Spleen (tissue), 13 donors: ENCODE measurements at regions of chr17 and their contacts with region 1.

Region 1: DNA sequence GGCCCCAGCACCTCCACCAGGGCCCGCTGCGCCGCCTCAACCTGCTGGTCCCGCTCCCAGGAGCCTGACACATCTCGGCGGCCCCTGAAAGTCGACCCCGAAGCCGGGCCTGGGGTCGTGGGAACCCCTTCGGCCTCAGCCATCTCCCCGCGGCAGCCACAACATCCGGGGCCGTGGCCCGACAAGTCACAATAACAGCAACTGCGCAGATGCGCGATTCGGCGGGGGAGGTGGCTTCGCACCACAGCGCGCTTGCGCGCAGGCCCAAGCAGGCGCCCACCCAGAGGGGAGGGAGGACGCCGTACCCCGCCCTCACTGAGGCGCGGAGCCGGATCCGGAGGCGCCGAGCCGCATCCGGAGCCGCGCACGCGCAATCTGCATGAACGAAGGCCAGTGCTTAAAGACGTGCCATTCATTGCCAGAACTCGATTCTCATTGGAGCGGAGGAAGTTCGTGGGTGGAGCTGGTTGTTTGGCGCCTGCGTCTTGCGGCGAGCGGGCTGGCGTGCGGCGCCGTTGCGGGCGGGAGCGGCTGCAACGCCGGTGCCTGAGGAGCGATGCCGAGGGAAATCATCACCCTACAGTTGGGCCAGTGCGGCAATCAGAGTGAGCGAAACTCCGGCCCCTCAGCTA is at the starts of genes RETREG3 and TUBG1:
- DNase-seq: peak; percentile 100
- H3K4me3 ChIP-seq: peak within 1 kb of the TSS; percentile 74 to 89 (median 84)
- H3K27ac ChIP-seq: peak within 1 kb of the TSS; percentile 88 to 99 (median 94)
- H3K4me1 ChIP-seq: peaks cover 26 to 61% (median 49%) of the 10 kb centered on the region in 6 donors
- H3K27me3 ChIP-seq: no peaks in the 10 kb centered on the region
- CTCF ChIP-seq: peak in 6 of 11 experiments; percentile 15 to 43 (median 28)
- POLR2A ChIP-seq: peak; percentile 61 to 89 (median 88)
- total RNA-seq, gene RETREG3: 65.8 to 87.5 (median 80.5) TPM
- total RNA-seq, gene TUBG1: 20.4 to 33.8 (median 26.3) TPM

Region 2: GRCh38 chr17:42653179-42654124 is 44.2 kb after region 1 on chr17:
- intact Hi-C with region 1: no loop called
- DNase-seq: no peak
- H3K4me3 ChIP-seq: peak overlapping the region in 5 of 8 donors; percentile 2 to 38 (median 7)
- H3K27ac ChIP-seq: peak overlapping the region in 7 of 8 donors; percentile 15 to 68 (median 55)
- H3K4me1 ChIP-seq: peaks cover 0 to 21% (median 7%) of the 10 kb centered on the region in 6 donors
- H3K27me3 ChIP-seq: peaks cover 0 to 29% (median 11%) of the 10 kb centered on the region in 7 donors
- CTCF ChIP-seq: no peak
- POLR2A ChIP-seq: no peak

Region 3: GRCh38 chr17:42677008-42677857 is 67.9 kb after region 1 on chr17:
- intact Hi-C with region 1: loop called (anchors 5 kb)
- DNase-seq: peak; percentile 99
- H3K4me3 ChIP-seq: peak overlapping the region; percentile 66 to 90 (median 76)
- H3K27ac ChIP-seq: peak overlapping the region; percentile 58 to 96 (median 94)
- H3K4me1 ChIP-seq: peaks cover 58 to 99% (median 89%) of the 10 kb centered on the region in 6 donors
- H3K27me3 ChIP-seq: peaks cover 0 to 71% (median 33%) of the 10 kb centered on the region in 7 donors
- CTCF ChIP-seq: peak in 1 of 11 experiments; percentile 32
- POLR2A ChIP-seq: no peak